ENCODE measurements at regions of chr11 and their contacts with region 1.

Region 1: DNA sequence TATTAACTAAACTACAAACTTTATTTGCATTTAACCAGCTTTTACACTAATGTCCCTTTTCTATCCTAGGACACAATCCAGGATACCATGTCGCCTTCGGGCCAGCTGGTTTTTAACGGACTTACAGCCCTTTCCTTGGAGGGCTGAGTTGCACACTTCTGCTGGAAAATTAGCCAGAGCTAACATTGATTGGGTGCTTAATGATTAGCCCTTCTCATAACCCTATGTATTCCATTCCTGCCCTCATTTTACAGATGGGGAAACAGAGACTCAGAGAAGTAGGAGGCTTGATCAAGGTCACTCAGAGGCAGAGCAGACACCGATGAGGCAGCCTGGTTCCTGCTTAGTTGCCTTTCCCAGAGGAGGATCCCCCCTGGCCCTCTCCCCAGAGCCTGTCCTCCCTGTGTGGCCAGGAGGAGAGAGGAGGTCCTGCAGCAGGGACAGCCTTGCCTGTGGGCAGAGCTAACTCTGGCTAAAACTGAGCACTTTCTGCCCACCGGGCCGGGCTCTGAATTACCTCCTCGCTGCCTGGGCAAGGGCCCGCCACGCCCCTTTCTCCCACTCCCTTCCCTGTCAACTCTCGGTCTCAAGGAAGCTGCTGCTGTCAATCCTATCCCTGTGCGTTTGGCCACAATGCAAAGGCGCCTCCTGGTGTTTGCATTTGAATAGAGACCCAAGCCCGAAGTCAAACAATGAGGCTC is 59.6 kb upstream of the PAX6 start:
- DNase-seq: peak; percentile 32 to 66 (median 37)
- ATAC-seq: peak; percentile 92
- H3K4me3 ChIP-seq: no peak overlapping the region
- H3K27ac ChIP-seq: no peak overlapping the region
- H3K4me1 ChIP-seq: no peaks in the 10 kb centered on the region
- H3K27me3 ChIP-seq: peaks cover 5 to 12% of the 10 kb centered on the region in 2 experiments; a peak in 2 of 5 replicates
- CTCF ChIP-seq: peak; percentile 73 to 81 (median 79)
- EP300 ChIP-seq: no peak
- POLR2A ChIP-seq: no peak
- RAD21 ChIP-seq: peak; percentile 81 to 91

Region 2: GRCh38 chr11:31325160-31325559 is 545.6 kb before region 1 on chr11:
- CTCF ChIA-PET with region 1: no interaction called
- POLR2A ChIA-PET with region 1: no interaction called
- in situ Hi-C with region 1: no loop called
- intact Hi-C with region 1: no loop called
- DNase-seq: no peak
- ATAC-seq: no peak
- H3K4me3 ChIP-seq: no peak overlapping the region
- H3K27ac ChIP-seq: no peak overlapping the region
- H3K4me1 ChIP-seq: no peaks in the 10 kb centered on the region; a peak in 1 of 5 replicates
- H3K27me3 ChIP-seq: 0 out of 5 replicates have a peak, but pooled peaks cover 0 to 4% of the 10 kb centered on the region in 2 experiments
- CTCF ChIP-seq: no peak
- EP300 ChIP-seq: no peak
- POLR2A ChIP-seq: no peak
- RAD21 ChIP-seq: no peak

Region 3: DNA sequence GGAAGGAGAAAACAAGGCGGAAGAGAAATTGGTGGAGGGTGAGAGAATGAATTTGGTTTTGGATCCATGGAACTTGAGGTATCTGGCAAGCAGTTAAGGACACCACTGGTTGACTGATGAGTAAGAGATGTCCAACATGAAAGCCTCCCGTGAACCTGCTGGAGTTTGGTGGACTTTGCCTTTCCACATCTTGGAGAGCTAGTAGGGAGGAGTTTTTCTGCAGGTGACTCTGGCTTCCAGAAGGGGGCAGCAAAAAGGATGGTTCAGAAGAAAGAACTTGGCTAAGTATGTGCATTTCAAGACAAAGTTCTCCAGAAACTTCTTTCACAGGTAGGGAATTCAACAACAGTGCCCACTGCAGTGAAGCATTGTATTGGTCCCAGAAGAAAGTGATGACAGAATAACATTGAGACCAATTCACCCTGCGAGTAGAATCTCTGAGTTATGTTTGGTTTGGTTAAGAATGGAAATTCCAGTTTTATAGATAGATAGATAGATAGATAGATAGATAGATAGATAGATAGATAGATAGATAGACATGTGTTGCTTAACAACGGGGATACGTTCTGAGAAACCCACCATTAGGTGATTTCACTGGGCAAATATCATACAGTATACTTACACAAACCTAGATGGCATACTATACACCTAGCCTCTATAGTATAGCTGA is 529.7 kb before region 1 on chr11:
- CTCF ChIA-PET with region 1: interaction called, 3 read pairs
- POLR2A ChIA-PET with region 1: no interaction called
- in situ Hi-C with region 1: no loop called
- intact Hi-C with region 1: loop called (anchors 1 kb)
- DNase-seq: peak; percentile 19 to 39 (median 24)
- ATAC-seq: peak; percentile 73
- H3K4me3 ChIP-seq: no peak overlapping the region
- H3K27ac ChIP-seq: no peak overlapping the region
- H3K4me1 ChIP-seq: no peaks in the 10 kb centered on the region
- H3K27me3 ChIP-seq: no peaks in the 10 kb centered on the region
- CTCF ChIP-seq: peak; percentile 43 to 61 (median 60); a peak in 5 of 6 replicates
- EP300 ChIP-seq: no peak
- POLR2A ChIP-seq: no peak
- RAD21 ChIP-seq: peak in 1 of 2 experiments; percentile 57; a peak in 2 of 4 replicates

Region 4: DNA sequence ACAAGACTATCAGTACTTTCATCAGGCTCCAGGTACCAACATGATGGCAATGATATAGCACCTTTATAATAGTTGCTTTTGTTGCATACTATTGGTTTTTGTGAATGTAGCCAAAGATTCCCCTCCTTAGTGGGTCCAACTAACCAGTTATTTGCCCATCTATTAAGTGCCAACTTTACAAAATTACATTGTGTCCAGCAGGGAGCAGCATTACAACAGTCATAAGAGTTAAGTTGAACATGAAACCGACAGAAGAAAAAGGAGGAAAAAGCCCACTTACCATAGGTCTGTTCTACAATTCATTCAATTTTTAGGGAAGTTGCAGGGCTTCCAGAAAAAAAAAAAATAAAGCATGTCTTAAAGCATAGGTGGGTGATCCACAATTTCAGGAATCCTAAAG is 382.9 kb before region 1 on chr11:
- CTCF ChIA-PET with region 1: interaction called, 4 read pairs
- POLR2A ChIA-PET with region 1: no interaction called
- in situ Hi-C with region 1: no loop called
- intact Hi-C with region 1: loop called (anchors 2 kb)
- DNase-seq: peak in 2 of 4 experiments; percentile 12 to 43
- ATAC-seq: peak; percentile 67
- H3K4me3 ChIP-seq: no peak overlapping the region
- H3K27ac ChIP-seq: no peak overlapping the region
- H3K4me1 ChIP-seq: no peaks in the 10 kb centered on the region; a peak in 1 of 5 replicates
- H3K27me3 ChIP-seq: no peaks in the 10 kb centered on the region
- CTCF ChIP-seq: peak in 2 of 3 experiments; percentile 34 to 38; a peak in 4 of 6 replicates
- EP300 ChIP-seq: no peak
- POLR2A ChIP-seq: no peak
- RAD21 ChIP-seq: no peak; a peak in 1 of 4 replicates

Region 5: DNA sequence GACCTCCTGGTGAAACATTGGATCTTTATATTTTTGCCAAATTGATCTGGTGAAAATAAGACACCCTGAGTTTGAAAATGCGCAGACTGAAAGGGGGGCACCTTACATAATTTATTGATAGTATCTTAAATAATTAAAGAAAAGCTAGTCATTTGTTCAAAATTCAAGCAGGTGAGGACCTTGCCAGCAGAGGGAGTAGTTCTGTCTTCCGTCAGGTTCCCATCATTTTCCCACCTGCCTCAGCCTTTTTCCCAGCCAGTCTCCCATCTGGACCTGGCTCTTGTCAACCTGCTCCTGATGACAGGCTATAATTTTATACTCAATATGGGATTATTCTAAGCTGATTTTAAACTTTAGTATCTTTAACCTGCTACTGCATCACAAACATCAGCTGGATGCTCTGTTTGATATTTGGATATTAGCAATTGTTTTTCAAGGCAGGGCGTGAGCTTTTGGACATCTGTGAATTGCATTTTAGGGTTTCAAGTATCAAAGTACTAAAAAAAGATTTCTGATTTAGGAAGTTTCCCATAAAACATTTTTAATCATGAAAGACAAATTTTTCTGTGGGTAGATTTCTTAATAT is 229.2 kb before region 1 on chr11:
- CTCF ChIA-PET with region 1: no interaction called
- POLR2A ChIA-PET with region 1: no interaction called
- in situ Hi-C with region 1: loop called (anchors 10 kb)
- intact Hi-C with region 1: loop called (anchors 1 kb)
- DNase-seq: peak; percentile 12 to 40 (median 18)
- ATAC-seq: no peak
- H3K4me3 ChIP-seq: no peak overlapping the region
- H3K27ac ChIP-seq: no peak overlapping the region
- H3K4me1 ChIP-seq: no peaks in the 10 kb centered on the region
- H3K27me3 ChIP-seq: no peaks in the 10 kb centered on the region
- CTCF ChIP-seq: peak; percentile 35 to 64 (median 58)
- EP300 ChIP-seq: no peak
- POLR2A ChIP-seq: no peak
- RAD21 ChIP-seq: peak; percentile 15 to 45; a peak in 2 of 4 replicates

Region 6: DNA sequence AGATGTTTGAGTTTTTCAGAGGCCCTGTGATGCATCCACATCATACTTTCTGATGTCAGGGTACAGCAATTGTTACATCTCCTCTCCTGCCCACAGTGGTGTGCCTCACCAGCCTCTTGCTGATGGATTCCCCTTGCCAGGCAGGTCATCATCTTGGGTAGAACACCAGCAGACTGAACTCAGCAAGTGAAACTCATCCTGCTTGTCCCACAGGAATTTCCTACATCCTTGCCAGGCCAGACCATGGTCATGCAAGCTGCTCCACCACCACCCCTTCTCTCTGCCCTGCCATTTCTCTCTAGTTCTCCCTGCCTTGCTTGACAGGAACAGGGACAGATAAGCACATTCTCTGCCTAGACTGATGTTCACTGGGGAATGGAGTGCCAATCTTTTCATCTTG is 145.6 kb before region 1 on chr11:
- CTCF ChIA-PET with region 1: no interaction called
- POLR2A ChIA-PET with region 1: no interaction called
- in situ Hi-C with region 1: no loop called
- intact Hi-C with region 1: no loop called
- DNase-seq: no peak
- ATAC-seq: no peak
- H3K4me3 ChIP-seq: no peak overlapping the region
- H3K27ac ChIP-seq: no peak overlapping the region
- H3K4me1 ChIP-seq: no peaks in the 10 kb centered on the region
- H3K27me3 ChIP-seq: no peaks in the 10 kb centered on the region
- CTCF ChIP-seq: no peak
- EP300 ChIP-seq: no peak
- POLR2A ChIP-seq: no peak
- RAD21 ChIP-seq: no peak

Region 7: GRCh38 chr11:31895926-31896325 is 25.2 kb after region 1 on chr11:
- CTCF ChIA-PET with region 1: no interaction called
- POLR2A ChIA-PET with region 1: no interaction called
- in situ Hi-C with region 1: no loop called
- intact Hi-C with region 1: no loop called
- DNase-seq: no peak
- ATAC-seq: no peak
- H3K4me3 ChIP-seq: no peak overlapping the region
- H3K27ac ChIP-seq: no peak overlapping the region
- H3K4me1 ChIP-seq: no peaks in the 10 kb centered on the region
- H3K27me3 ChIP-seq: no peaks in the 10 kb centered on the region; a peak in 1 of 5 replicates
- CTCF ChIP-seq: no peak
- EP300 ChIP-seq: no peak
- POLR2A ChIP-seq: no peak
- RAD21 ChIP-seq: no peak

Region 8: DNA sequence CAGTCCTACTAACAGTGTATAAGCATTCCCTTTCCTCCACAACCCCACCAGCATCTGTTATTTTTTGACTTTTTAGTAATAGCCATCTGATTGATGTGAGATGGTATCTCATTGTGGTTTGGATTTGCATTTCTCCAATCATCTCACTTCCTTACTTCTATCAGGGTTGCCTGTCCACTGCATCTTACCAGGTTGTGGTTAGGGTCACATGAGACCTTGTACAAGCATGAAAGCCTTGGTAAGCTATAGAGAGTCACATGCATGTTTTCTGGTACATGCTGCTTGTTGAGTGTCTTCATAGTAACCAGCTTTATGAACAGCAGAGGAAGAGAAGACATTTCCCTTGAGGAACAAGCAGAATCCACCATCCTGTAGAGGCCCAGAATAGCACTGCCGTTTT is 43.2 kb after region 1 on chr11:
- CTCF ChIA-PET with region 1: no interaction called
- POLR2A ChIA-PET with region 1: no interaction called
- in situ Hi-C with region 1: no loop called
- intact Hi-C with region 1: no loop called
- DNase-seq: no peak
- ATAC-seq: no peak
- H3K4me3 ChIP-seq: no peak overlapping the region
- H3K27ac ChIP-seq: no peak overlapping the region
- H3K4me1 ChIP-seq: no peaks in the 10 kb centered on the region
- H3K27me3 ChIP-seq: no peaks in the 10 kb centered on the region
- CTCF ChIP-seq: no peak
- EP300 ChIP-seq: no peak
- POLR2A ChIP-seq: no peak
- RAD21 ChIP-seq: no peak